Right ventricle myocardium superior (tissue), 1 donor: ENCODE measurements at regions of chr9 and their contacts with region 1.

Region 1: GRCh38 chr9:135961277-135961705 is at the start of gene UBAC1:
- DNase-seq: peak; percentile 99
- ATAC-seq: peak; percentile 91
- total RNA-seq, gene UBAC1: 107 TPM

Region 2: DNA sequence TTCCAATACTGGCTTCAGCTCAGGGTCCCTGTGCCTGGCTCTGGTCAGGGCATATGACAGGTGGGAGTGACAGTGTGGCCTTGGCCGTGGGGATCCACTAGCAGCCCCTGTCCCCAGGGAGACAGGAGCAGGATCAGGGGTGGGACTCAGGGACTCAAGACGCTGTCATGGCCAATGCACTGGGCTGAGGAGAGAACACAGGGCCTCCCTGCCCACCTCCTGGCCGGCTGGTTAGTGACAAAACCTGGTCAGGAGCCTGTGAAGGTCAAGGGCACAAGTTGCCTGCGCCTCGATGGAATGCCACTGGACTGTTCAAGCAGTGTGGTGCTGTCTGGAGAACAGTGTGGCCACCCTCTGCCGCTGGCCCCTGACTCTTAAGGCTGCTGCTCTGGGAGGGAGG is 787.0 kb before region 1 on chr9:
- intact Hi-C with region 1: no loop called
- DNase-seq: no peak
- ATAC-seq: no peak

Region 3: DNA sequence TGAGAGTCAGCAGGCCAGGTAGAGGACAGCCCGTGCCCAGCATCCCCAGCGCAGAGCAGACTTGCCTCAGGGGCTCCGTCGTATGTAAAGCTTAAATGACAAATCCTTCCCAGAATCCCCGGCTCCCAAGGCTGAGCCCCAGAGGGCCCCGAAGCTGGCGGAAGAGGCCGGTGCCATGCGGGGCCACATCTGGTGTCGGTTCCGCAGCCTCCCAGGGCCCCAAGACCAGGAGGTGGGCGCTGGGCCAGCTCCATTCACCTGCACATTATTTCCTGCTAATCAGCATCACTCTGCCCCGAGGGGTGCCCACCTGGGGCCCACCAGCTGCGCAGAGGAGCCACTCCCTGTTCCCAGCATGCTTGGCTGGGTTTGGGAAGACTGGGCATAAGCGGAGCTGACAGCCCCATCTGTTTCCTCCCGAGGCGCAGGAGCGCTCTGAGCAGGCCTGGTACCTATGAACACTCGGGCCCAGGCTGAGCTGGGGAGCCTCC is 605.7 kb before region 1 on chr9:
- intact Hi-C with region 1: no loop called
- DNase-seq: no peak
- ATAC-seq: no peak

Region 4: GRCh38 chr9:135914921-135915320 is 46.4 kb before region 1 on chr9:
- intact Hi-C with region 1: loop called (anchors 5 kb)
- DNase-seq: no peak
- ATAC-seq: no peak